Ascending aorta (tissue), 2 donors: ENCODE measurements at regions of chr7 and their contacts with region 1.

Region 1: DNA sequence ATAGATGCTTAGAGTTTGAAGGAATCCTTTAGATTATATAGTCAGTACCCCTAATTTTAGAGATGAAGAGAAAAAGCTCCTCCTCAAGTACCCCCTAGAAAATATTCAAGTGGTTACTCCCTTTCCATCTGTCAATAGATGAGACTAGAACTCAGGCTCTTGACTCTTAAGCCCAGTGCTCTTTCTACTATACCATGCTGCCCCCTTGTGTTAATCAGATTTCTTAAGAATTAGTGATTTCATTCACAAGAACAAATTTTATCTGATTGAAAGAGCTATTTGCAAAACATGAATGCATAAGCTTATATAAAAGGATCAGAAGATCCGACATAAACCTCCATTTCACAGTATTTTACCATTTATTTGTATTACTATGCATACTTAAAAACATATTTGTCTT is 179.3 kb downstream of the TFEC start:
- DNase-seq: no peak
- H3K4me3 ChIP-seq: no peak overlapping the region
- H3K27ac ChIP-seq: no peak overlapping the region
- H3K4me1 ChIP-seq: no peaks in the 10 kb centered on the region
- H3K27me3 ChIP-seq: no peaks in the 10 kb centered on the region
- CTCF ChIP-seq: peak in 1 of 3 experiments; percentile 35

Region 2: GRCh38 chr7:114026486-114027089 is 1824.7 kb before region 1 on chr7:
- intact Hi-C with region 1: loop called (anchors 2 kb)
- DNase-seq: no peak
- H3K4me3 ChIP-seq: no peak overlapping the region
- H3K27ac ChIP-seq: no peak overlapping the region
- H3K4me1 ChIP-seq: no peaks in the 10 kb centered on the region
- H3K27me3 ChIP-seq: no peaks in the 10 kb centered on the region
- CTCF ChIP-seq: peak; percentile 28 to 71 (median 60)